Activated naive CD4-positive, alpha-beta T cell treated with anti-CD3 and anti-CD28 coated beads, Interleukin-2, amount 10 ng/mL, durations not matched to agents 7 days and 5 days (primary cell): ENCODE measurements at regions of chr9 and their contacts with region 1.

Region 1: DNA sequence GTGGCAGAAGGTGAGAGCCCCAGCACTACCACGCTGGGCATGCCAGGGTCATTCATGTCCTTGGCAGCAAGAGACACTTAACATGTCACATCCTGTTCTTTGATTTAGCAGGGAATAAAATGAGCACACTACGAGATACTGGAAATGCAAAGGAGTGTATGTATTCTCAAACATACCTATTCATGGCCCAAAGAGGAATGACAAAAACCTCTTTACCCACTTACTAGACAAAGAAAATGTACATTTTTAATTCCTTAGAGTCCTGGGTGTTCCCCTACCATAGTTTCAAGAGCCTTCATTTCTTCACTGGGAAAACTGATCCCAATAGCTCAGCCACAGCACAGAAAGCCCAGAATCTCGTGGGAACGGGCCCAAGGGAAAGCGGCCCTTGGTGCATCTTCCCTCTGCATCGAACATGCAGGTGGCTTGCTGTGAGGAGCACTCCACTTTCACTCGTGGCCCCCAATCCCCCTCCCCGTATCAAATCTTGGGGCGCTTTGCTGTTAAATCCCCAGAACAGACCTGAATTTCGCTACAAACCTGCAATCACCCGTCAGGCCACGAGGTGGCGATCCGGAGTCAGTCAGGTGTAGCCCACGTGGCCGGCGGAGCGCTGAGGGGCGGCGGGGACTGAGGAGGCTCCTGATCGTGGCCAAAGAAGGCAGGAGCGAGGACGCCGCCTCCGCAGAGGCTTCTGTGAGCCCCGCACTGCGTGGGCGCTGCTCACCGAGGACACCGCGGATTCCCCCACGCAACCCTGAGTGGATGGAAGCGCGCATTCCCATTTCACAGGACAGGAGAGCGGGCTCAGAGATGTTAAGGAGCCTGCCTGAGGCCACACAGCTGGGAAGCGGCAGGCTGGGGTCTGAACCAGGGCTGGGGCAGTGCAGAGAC is 91.4 kb downstream of the LMX1B start:
- DNase-seq: peak; percentile 91
- H3K4me3 Mint-ChIP-seq: peak overlapping the region; percentile 24
- H3K27ac Mint-ChIP-seq: no peak overlapping the region
- H3K4me1 Mint-ChIP-seq: peaks cover 17% of the 10 kb centered on the region
- H3K27me3 Mint-ChIP-seq: peaks cover 54% of the 10 kb centered on the region

Region 2: DNA sequence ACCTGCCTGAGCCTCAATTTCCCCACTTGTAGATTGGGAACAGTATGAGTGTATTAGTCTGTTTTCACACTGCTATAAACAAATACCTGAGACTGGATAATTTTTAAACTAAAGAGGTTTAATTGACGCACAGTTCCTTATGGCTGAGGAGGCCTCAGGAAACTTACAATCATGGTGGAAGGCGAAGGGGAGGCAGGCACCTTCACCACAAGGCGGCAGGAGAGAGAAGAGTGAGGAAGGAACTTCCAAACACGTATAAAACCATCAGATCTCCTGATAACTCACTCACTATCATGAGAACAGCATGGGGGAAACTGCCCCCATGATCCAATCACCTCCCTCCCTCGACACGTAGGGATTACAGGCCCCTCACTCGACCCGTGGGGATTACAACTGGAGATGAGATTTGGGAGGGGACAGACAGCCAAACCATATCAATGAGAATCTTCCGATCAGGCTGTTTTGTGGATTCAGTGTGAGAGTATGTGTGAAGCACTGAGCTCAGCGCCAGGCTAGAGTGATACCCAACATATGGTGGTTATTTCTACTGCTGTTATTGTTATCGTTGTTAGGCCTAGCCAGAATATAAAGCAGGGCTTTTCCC is 106.0 kb before region 1 on chr9:
- CTCF ChIA-PET with region 1: no interaction called
- DNase-seq: no peak
- H3K4me3 Mint-ChIP-seq: no peak overlapping the region
- H3K27ac Mint-ChIP-seq: no peak overlapping the region
- H3K4me1 Mint-ChIP-seq: no peaks in the 10 kb centered on the region
- H3K27me3 Mint-ChIP-seq: peaks cover 54% of the 10 kb centered on the region

Region 3: GRCh38 chr9:126722252-126723078 is 17.3 kb after region 1 on chr9:
- CTCF ChIA-PET with region 1: interaction called, 39 read pairs
- DNase-seq: peak; percentile 92
- H3K4me3 Mint-ChIP-seq: peak overlapping the region; percentile 88
- H3K27ac Mint-ChIP-seq: peak overlapping the region; percentile 98
- H3K4me1 Mint-ChIP-seq: peaks cover 48% of the 10 kb centered on the region
- H3K27me3 Mint-ChIP-seq: peaks cover 7% of the 10 kb centered on the region

Region 4: GRCh38 chr9:126752376-126752775 is 47.3 kb after region 1 on chr9:
- CTCF ChIA-PET with region 1: interaction called, 19 read pairs
- DNase-seq: no peak
- H3K4me3 Mint-ChIP-seq: no peak overlapping the region
- H3K27ac Mint-ChIP-seq: no peak overlapping the region
- H3K4me1 Mint-ChIP-seq: peaks cover 30% of the 10 kb centered on the region
- H3K27me3 Mint-ChIP-seq: peaks cover 23% of the 10 kb centered on the region

Region 5: GRCh38 chr9:126773004-126773607 is 68.0 kb after region 1 on chr9:
- CTCF ChIA-PET with region 1: interaction called, 481 read pairs
- DNase-seq: peak; percentile 27
- H3K4me3 Mint-ChIP-seq: no peak overlapping the region
- H3K27ac Mint-ChIP-seq: no peak overlapping the region
- H3K4me1 Mint-ChIP-seq: peaks cover 2% of the 10 kb centered on the region
- H3K27me3 Mint-ChIP-seq: peaks cover 47% of the 10 kb centered on the region

Region 6: GRCh38 chr9:126791406-126792151 is 86.5 kb after region 1 on chr9:
- CTCF ChIA-PET with region 1: interaction called, 481 read pairs
- DNase-seq: no peak
- H3K4me3 Mint-ChIP-seq: no peak overlapping the region
- H3K27ac Mint-ChIP-seq: no peak overlapping the region
- H3K4me1 Mint-ChIP-seq: peaks cover 2% of the 10 kb centered on the region
- H3K27me3 Mint-ChIP-seq: peaks cover 65% of the 10 kb centered on the region

Region 7: DNA sequence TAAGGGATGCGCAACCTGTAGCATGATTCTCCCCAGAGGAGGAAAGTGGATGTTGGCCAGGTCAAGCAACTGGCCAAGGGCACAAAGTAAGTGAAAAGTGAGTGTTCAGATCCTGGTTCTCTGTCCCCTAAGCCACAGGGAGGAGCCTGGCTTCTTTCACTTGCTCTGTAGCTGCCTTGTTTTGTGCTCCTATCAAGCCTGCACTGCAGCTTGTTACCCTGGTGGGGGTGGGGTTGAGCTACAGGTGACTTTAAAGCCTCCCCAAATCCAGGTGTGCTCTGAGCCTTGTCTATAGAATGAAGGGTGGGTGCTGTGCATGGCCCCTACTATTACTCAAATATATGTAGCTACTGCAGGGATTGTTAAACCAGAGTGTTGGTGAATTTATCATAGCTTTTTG is 242.4 kb after region 1 on chr9:
- CTCF ChIA-PET with region 1: no interaction called
- DNase-seq: peak; percentile 39
- H3K4me3 Mint-ChIP-seq: no peak overlapping the region
- H3K27ac Mint-ChIP-seq: no peak overlapping the region
- H3K4me1 Mint-ChIP-seq: no peaks in the 10 kb centered on the region
- H3K27me3 Mint-ChIP-seq: peaks cover 45% of the 10 kb centered on the region